Psoas muscle (tissue), 8 donors: ENCODE measurements at regions of chrX and their contacts with region 1.

Region 1: DNA sequence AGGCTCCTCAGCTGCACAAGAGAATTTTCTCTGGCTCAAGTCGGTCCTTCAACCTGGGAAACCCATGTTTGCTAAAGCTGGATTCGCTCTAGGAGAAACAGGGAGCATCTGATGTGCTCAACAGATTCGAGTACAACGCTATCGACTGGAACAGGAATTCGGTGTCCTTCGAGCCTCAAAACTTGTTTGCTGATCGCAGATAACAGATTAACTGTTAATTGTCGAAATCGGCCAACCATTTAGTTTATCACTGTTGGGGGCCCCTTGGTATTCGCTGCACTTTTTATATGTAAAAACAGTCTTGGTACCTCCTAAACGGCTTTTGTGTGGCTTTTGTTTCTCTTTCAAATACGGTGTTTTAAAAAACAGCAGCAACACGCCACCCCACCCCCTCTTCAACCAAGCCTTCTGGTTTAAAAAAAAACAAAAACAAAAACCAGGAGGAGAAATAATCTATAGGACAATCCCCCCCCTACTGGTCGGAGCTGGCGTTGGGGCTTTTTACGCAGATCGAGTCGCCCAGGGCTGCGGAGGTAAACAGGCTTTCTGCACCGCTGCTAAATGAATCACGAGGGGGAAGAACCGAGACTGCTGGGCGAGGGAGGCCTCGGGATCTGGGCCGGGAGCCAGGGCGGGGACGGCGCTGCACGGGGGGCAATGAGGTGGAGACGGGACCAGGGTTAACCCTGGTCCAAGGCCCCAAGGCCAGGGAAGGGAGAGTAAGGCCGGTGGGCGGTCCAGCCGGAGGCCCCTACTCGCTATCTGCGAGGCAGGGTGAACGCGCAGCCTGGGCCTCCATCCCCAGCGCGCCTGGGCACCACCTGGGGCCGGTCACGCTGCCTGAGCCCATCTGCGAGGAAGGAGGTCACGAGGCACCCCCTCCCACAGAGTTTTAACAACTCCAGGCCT is 71.7 kb upstream of the BCOR start:
- DNase-seq: peak; percentile 48 to 66
- ATAC-seq: no peak
- H3K4me3 ChIP-seq: no peak overlapping the region
- H3K27ac ChIP-seq: peak overlapping the region; percentile 23
- H3K4me1 ChIP-seq: peaks cover 22% of the 10 kb centered on the region
- H3K27me3 ChIP-seq: peaks cover 0 to 93% (median 0%) of the 10 kb centered on the region in 3 donors
- CTCF ChIP-seq: no peak

Region 2: DNA sequence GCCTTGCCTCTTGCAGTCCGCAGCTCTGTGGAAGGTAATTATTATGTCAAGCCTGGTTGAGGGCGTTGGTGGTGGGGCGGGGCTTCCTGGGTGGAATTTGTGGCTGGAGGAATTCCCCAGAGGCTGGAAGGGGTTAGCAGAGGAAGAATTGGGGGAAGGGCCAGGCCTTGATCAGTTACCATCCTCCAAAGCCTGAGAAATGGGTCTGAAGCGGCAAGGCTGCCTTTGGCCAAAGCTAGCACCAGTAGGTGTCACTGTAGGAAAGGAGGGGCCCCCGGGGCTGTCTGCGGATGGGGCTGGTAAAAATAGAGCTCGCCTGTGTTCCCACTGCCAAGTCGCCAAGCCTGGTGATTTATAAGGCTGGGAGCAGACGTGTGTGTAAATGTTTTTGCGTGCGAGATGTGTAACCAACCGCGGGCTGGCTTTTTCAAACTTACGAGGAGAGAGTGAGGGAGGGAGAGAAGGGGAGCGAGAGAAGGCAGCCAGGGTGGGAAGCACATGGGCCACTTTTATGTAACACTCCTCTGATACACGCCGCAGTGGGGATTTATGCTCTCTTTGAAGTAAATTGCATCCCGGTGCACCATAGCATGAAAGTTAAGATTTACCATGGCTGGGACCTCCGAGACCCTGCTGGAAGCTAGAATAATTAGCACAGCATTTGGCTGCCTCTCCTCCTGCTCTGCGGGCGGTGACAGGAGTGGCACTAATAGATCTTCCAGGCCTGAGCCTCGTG is 438.6 kb before region 1 on chrX:
- intact Hi-C with region 1: loop called in 1 of 2 experiments (anchors 10 kb)
- DNase-seq: peak; percentile 67 to 82
- ATAC-seq: peak; percentile 93 to 99 (median 96)
- H3K4me3 ChIP-seq: no peak overlapping the region
- H3K27ac ChIP-seq: no peak overlapping the region
- H3K4me1 ChIP-seq: peaks cover 8% of the 10 kb centered on the region
- H3K27me3 ChIP-seq: peaks cover 0 to 22% (median 0%) of the 10 kb centered on the region in 3 donors
- CTCF ChIP-seq: peak; percentile 55

Region 3: DNA sequence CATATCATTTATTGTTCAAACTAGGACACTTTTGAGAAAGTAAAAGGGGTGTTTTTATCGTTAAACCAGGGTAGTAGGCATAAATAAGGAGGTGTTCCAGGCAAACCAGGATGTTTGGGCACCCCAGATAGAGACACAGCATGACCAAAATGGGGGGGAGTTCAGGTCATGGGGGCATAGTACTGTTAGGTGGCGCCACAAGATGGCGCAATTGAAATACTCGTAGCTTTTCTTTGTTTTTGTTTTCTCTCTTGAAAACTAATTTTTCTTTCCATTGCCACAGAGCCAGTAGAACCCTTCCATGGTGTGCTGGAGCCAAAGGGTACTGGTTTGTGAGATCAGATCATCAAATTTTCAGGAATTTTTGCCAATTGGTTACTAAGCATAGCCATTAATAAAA is 355.1 kb before region 1 on chrX:
- intact Hi-C with region 1: loop called in 1 of 2 experiments (anchors 10 kb)
- DNase-seq: peak in 1 of 2 donors; percentile 44
- ATAC-seq: peak; percentile 50 to 70 (median 56)
- H3K4me3 ChIP-seq: no peak overlapping the region
- H3K27ac ChIP-seq: peak overlapping the region; percentile 27
- H3K4me1 ChIP-seq: no peaks in the 10 kb centered on the region
- H3K27me3 ChIP-seq: peaks cover 0 to 15% (median 0%) of the 10 kb centered on the region in 3 donors
- CTCF ChIP-seq: peak; percentile 39

Region 4: DNA sequence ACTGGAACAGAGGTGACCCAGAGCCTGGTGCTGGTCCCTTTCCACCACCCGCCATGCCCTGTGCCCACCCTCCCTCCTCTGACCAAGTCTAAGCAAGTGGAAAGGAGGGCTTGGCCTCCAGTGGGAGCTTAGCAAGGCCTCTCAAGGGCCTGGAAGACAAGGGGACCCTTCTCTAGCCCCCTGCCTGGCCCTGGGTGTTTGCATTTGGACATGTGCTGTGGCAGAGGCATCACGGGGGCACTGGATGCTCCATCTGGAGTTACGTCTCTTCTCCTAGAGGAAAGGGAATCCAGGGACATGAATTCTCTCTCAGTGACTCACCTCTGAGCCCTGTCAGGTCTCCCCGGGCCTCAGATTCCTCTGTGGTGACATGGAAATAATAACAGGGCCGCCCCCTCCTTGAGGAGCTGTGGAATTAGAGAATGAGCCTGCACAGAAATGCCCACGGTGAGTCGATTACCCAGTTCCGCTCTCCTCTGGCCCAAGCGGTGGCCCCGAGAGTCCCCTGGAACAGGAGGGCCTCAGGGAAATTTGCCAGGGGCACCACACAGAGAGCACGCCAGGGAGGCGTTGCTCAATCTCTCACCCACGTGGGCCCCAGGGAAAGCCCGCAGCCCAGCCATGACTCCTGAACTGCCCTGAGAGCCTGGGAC is 261.4 kb before region 1 on chrX:
- intact Hi-C with region 1: loop called in 1 of 2 experiments (anchors 10 kb)
- DNase-seq: peak; percentile 73 to 84
- ATAC-seq: peak; percentile 92 to 96 (median 93)
- H3K4me3 ChIP-seq: peak overlapping the region; percentile 16
- H3K27ac ChIP-seq: peak overlapping the region; percentile 73
- H3K4me1 ChIP-seq: no peaks in the 10 kb centered on the region
- H3K27me3 ChIP-seq: peaks cover 0 to 13% (median 0%) of the 10 kb centered on the region in 3 donors
- CTCF ChIP-seq: no peak

Region 5: GRCh38 chrX:40006106-40007017 is 163.1 kb before region 1 on chrX:
- intact Hi-C with region 1: loop called in 1 of 2 experiments (anchors 5 kb)
- DNase-seq: peak; percentile 60 to 80
- ATAC-seq: peak; percentile 66 to 81 (median 77)
- H3K4me3 ChIP-seq: peak overlapping the region; percentile 28
- H3K27ac ChIP-seq: no peak overlapping the region
- H3K4me1 ChIP-seq: no peaks in the 10 kb centered on the region
- H3K27me3 ChIP-seq: peaks cover 0 to 82% (median 0%) of the 10 kb centered on the region in 3 donors
- CTCF ChIP-seq: no peak

Region 6: GRCh38 chrX:40054792-40055191 is 114.7 kb before region 1 on chrX:
- intact Hi-C with region 1: no loop called
- DNase-seq: no peak
- ATAC-seq: no peak
- H3K4me3 ChIP-seq: no peak overlapping the region
- H3K27ac ChIP-seq: no peak overlapping the region
- H3K4me1 ChIP-seq: no peaks in the 10 kb centered on the region
- H3K27me3 ChIP-seq: no peaks in the 10 kb centered on the region
- CTCF ChIP-seq: no peak

Region 7: GRCh38 chrX:40108959-40109287 is 60.5 kb before region 1 on chrX:
- intact Hi-C with region 1: no loop called
- DNase-seq: peak; percentile 84 to 91
- ATAC-seq: peak; percentile 70 to 78 (median 72)
- H3K4me3 ChIP-seq: peak overlapping the region; percentile 67
- H3K27ac ChIP-seq: peak overlapping the region; percentile 93
- H3K4me1 ChIP-seq: peaks cover 23% of the 10 kb centered on the region
- H3K27me3 ChIP-seq: peaks cover 0 to 68% (median 0%) of the 10 kb centered on the region in 3 donors
- CTCF ChIP-seq: no peak

Region 8: DNA sequence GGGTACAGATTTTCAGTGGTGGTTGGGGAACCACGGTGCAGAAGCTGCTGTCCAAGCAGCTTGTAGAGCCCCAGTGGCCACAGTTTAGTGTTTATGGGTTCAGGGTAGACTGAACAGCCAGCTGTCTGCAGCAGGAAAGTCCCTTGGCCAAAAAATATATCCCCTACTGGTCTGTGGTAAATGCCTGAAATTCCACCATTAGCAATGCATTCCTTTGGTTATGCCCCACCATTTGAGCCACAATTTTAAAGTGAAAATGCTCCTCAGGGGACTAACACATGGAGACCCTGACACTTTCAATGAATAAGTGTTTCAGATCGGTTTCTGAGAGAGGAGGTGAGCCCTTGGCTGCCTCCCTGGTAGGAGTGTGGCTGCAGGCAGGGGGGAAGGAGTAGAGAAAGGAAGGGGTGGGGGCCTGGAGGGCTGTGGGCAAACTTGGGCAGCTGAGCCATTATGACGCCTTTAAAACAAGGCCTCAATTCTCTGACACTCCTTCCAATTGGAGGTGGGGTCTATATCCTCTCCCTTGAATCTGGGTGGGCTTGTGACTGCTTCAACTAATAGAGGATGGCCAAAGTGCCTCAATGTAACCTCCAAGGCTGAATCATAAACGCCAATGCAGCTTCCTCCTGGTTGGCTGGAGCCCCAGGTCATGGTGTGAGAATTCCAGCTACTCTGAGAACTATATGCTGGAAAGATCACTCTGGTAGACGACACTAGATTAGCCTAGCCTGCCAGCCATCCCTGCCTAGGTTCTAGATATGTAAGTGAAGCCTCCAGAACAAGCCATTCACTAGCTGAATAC is 335.6 kb after region 1 on chrX:
- intact Hi-C with region 1: no loop called
- DNase-seq: no peak
- ATAC-seq: no peak
- H3K4me3 ChIP-seq: no peak overlapping the region
- H3K27ac ChIP-seq: no peak overlapping the region
- H3K4me1 ChIP-seq: no peaks in the 10 kb centered on the region
- H3K27me3 ChIP-seq: peaks cover 0 to 34% (median 2%) of the 10 kb centered on the region in 3 donors
- CTCF ChIP-seq: no peak